ENCODE measurements at regions of chr9 and their contacts with region 1.

Region 1: DNA sequence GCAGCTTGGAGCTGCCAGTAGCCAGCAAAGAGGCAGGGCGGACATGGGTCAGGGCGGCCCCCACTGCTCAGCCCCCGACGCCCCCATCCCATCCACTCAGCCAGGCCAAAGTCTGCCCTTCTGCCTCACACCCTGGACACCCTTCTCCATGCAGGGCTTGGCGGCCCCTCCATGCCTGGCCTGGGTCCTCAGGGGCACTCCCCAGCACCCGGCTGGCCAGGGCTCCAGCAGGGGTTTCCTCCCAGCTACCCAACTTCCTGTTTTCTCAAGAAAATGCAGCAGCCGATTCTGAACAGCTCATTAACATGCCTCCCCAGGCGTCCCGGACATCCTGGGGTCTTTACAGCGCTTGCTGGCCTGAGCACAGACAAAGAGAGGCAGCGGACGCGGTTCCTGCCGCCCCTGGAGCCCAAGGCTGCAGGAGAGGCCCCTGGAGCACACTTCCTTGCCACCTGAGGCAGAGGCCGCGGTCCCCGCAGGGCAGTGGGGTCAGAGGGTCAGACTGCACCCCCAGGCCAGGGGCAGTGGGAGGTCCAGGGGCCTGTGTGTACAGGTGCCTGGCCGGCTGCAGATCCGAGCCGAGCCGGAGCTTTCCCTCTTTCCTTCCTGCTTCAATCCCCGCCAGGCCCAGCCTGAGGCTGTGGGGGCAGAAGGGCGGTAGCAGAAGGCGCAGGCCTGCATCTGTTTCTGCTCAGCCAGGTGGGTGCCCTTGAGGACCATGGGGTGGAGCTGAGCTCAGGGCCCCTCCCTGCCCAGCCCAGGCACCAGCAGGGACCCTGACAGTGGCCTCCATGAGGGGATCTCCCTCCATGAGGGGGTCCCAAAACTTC is 18.7 kb upstream of the NRARP start:
- DNase-seq: peak in 2 of 3 donors; percentile 62 to 70
- ATAC-seq: peak in 1 of 2 donors; percentile 7
- H3K4me3 ChIP-seq: no peak overlapping the region
- H3K27ac ChIP-seq: no peak overlapping the region
- H3K4me1 ChIP-seq: no peaks in the 10 kb centered on the region
- H3K27me3 ChIP-seq: no peaks in the 10 kb centered on the region

Region 2: GRCh38 chr9:137370865-137371520 is 50.2 kb after region 1 on chr9:
- intact Hi-C with region 1: loop called in 1 of 4 experiments (anchors 10 kb)
- DNase-seq: peak; percentile 8 to 52 (median 29)
- ATAC-seq: no peak
- H3K4me3 ChIP-seq: no peak overlapping the region
- H3K27ac ChIP-seq: no peak overlapping the region
- H3K4me1 ChIP-seq: no peaks in the 10 kb centered on the region
- H3K27me3 ChIP-seq: no peaks in the 10 kb centered on the region

Measured in right cardiac atrium (tissue), 5 donors.